Posterior cingulate gyrus (tissue), 11 donors: ENCODE measurements at regions of chr11 and their contacts with region 1.

Region 1: GRCh38 chr11:40130427-40130826 is 1329.0 kb downstream of the LRRC4C start:
- DNase-seq: peak in 6 of 10 donors; percentile 15 to 62 (median 42)

Region 2: DNA sequence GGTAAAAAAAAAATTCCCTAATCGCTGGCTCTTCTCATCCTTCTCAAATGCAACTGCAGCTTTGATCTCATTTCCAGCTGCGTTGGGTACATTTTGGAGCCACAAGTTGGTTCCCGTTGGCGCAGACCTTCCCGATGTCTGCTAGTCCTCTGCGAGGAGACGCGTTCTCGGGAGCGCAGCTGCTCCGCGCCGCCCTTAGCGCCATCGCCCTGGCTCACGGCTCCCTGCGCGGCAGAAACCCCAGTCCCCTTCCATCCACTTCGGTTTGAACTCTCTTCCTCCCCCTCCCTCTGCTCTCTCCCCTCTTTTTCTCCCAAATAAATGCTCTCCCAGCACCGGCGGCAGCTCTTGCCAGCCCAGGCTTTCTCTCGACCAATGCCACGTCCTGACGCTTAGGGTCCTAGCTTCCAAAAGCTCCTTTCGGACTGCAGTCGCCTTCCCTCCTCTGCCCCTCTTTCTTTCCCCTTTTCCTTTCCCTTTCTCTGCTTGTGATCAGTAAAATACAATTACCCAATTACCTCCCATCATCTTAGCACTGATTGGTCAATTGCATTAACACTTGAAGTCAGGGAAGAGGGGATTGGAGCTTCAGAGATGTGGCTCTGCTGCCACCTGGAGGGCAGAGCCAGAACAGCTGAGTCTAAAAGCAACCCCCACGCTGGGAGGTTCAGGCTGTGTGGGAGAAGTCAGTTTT is 163.4 kb after region 1 on chr11:
- intact Hi-C with region 1: loop called (anchors 1 kb)
- DNase-seq: peak; percentile 67 to 97 (median 80)